Motor neuron (in vitro differentiated cells): ENCODE measurements at regions of chr16 and their contacts with region 1.

Region 1: DNA sequence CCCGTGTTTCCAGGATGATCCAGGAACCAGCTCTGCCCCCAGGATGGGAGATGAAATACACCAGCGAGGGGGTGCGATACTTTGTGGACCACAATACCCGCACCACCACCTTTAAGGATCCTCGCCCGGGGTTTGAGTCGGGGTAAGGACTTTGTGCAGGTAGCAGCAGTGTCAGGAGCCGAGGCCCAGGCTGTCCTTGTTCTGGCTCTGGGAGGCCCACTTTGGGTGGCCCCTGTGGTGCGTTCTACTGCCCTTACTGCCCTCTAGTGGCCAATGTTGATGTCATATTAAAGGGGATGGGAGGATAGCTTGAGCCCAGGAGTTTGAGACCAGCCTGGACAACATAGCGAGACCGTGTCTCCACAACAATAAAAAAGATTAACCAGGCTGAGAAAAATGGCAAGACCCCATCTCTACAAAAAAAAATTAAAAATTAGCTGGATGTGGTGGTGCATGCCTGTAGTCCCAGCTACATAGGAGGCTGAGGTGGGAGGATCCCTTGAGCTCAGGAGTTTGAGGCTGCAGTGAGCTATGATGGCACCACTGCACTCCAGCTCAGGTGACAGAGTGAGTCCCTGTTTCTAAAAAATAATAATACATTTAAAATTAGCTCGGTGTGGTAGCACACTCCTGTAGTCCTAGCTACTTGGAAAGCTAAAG is 20.9 kb upstream of the CLEC18A start:
- ATAC-seq: peak; percentile 66 to 98 (median 80)
- H3K4me3 ChIP-seq: no peak overlapping the region
- H3K27ac ChIP-seq: no peak overlapping the region
- H3K4me1 ChIP-seq: peaks cover 0 to 2% of the 10 kb centered on the region in 2 donors

Region 2: GRCh38 chr16:69451166-69451565 is 479.1 kb before region 1 on chr16:
- in situ Hi-C with region 1: no loop called
- ATAC-seq: peak in 1 of 8 experiments; percentile 29
- H3K4me3 ChIP-seq: no peak overlapping the region
- H3K27ac ChIP-seq: no peak overlapping the region
- H3K4me1 ChIP-seq: no peaks in the 10 kb centered on the region

Region 3: GRCh38 chr16:69532641-69533459 is 397.4 kb before region 1 on chr16:
- in situ Hi-C with region 1: no loop called
- ATAC-seq: peak in 1 of 8 experiments; percentile 14
- H3K4me3 ChIP-seq: no peak overlapping the region
- H3K27ac ChIP-seq: no peak overlapping the region
- H3K4me1 ChIP-seq: peaks cover 2% of the 10 kb centered on the region in 2 donors

Region 4: DNA sequence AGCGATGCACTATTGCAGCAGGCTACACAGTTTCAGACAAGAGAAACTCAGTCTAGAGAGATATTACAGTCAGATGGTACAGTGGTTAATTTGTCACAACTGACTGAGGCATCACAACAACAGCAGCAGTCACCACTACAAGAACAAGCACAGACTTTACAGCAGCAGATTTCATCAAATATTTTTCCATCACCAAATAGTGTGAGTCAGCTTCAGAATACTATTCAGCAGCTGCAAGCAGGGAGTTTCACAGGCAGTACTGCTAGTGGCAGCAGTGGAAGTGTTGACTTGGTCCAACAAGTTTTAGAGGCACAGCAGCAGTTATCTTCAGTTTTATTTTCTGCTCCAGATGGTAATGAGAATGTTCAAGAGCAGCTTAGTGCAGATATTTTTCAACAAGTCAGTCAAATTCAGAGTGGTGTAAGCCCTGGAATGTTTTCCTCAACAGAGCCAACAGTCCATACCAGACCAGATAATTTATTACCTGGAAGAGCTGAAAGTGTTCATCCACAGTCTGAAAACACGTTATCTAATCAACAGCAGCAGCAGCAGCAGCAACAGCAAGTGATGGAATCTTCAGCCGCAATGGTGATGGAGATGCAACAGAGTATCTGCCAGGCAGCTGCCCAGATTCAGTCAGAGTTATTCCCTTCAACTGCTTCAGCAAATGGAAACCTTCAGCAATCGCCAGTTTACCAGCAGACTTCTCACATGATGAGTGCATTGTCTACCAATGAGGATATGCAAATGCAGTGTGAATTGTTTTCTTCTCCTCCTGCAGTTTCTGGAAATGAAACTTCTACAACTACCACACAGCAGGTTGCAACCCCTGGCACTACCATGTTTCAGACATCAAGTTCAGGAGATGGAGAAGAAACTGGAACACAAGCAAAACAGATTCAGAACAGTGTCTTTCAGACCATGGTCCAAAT is 238.0 kb before region 1 on chr16:
- in situ Hi-C with region 1: no loop called
- ATAC-seq: peak in 2 of 8 experiments; percentile 71 to 83
- H3K4me3 ChIP-seq: no peak overlapping the region
- H3K27ac ChIP-seq: no peak overlapping the region
- H3K4me1 ChIP-seq: no peaks in the 10 kb centered on the region

Region 5: DNA sequence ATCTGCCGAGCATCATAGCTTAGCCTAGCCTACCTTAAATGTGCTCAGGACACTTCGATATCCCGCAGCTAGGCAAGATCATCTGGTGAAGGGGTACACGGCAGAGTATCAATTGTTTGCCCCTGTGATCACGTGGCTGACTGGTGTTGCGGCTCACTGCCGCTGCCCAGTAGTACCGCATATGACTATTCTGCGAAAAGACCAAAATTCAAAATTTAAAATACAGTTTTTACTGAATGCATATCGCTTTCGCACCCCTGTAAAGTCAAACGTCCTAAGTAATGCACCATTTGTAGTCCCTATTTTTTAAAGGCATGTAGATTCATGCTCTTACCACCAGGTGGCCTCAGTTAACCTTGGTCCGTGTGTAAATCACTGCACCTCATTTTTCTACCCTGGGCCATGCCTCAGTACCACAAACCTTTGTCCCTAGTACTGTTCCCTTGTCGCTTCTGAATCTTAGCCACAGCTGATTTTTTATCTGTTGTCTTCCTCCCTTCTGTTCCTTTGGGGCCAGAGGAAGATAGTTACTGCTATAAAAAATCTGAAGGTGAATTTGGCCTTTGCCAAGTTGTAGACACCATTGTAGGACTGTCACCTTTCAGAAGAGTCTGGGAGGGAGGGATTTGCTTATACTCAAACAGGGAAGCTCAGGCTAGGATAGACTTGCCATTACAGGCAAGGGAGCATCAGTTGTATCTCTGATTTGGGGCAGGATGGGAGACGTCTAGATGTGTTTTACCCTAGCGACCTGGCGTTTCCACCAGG is 133.7 kb before region 1 on chr16:
- in situ Hi-C with region 1: loop called in 3 of 9 experiments (anchors 10 to 25 kb)
- ATAC-seq: peak; percentile 81 to 91 (median 87)
- H3K4me3 ChIP-seq: peak overlapping the region in 4 of 5 donors; percentile 6 to 12 (median 11)
- H3K27ac ChIP-seq: no peak overlapping the region
- H3K4me1 ChIP-seq: peaks cover 0 to 13% of the 10 kb centered on the region in 2 donors

Region 6: DNA sequence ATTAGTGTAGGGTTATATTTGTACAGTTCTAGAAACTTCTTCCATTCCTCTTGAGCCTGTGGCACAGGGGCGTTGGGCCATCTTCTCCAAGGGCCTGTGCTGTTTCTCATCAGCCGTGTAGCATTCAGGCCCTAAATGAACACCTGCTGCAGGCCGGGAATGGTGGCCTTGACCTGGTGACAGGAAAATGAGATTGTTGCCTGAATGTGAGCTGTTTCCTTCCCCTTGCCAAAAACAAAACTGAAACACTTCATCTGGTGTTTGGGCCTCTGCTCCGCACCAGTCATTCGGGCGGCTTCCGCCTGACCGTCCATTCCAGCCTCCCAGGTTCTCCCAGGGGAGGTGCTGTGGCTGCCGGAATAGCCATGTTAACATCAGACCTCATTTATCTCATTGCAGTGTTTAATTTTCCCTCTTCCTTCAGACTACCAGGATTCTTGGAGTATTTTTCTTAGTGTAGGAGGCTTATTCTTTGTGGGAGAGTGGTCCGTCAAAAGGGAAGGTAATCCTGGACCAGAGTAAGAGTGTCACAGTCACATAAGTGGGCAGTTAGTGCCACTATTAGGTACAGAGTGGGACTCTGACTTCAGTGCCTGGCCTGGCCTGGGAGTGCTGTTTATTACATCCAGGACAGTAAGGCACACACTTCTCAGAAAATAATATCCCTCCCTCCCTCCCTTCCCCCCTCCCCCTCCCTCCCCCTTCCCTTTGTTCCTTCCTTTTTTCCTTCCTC is 106.2 kb before region 1 on chr16:
- in situ Hi-C with region 1: loop called in 2 of 9 experiments (anchors 25 kb)
- ATAC-seq: peak in 1 of 8 experiments; percentile 16
- H3K4me3 ChIP-seq: no peak overlapping the region
- H3K27ac ChIP-seq: peak overlapping the region; percentile 0 to 22
- H3K4me1 ChIP-seq: peaks cover 5 to 7% of the 10 kb centered on the region in 2 donors

Region 7: DNA sequence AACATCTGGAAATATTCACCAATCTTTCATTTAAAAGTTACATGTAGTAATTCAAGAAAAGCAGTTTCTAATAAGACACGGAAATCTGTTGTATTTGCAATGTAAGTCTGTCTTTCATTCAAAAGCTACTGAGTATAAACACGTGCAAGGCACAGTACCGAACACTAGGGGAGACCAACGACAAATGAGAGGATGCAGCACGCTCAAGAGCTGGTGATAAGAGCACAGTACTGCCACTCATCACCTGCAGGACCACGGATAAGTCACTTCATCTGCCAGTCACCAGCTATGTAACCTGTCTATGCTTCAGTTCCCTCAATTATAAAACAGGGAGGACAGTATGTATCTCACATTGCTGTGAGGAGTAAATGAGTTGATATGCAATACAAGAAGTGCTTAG is 88.0 kb after region 1 on chr16:
- in situ Hi-C with region 1: no loop called
- ATAC-seq: peak in 4 of 8 experiments; percentile 32 to 97 (median 56)
- H3K4me3 ChIP-seq: no peak overlapping the region
- H3K27ac ChIP-seq: no peak overlapping the region
- H3K4me1 ChIP-seq: no peaks in the 10 kb centered on the region